ENCODE measurements at regions of chr22 and their contacts with region 1.

Region 1: GRCh38 chr22:24230911-24231656 is 13.8 kb downstream of the GGT5 start:
- DNase-seq: peak; percentile 71
- H3K4me3 Mint-ChIP-seq: no peak overlapping the region
- H3K27ac Mint-ChIP-seq: no peak overlapping the region
- H3K4me1 Mint-ChIP-seq: peaks cover 3% of the 10 kb centered on the region
- H3K27me3 Mint-ChIP-seq: peaks cover 2% of the 10 kb centered on the region

Region 2: GRCh38 chr22:24189249-24190158 is 41.6 kb before region 1 on chr22:
- CTCF ChIA-PET with region 1: interaction called, 26 read pairs
- POLR2A ChIA-PET with region 1: no interaction called
- DNase-seq: peak; percentile 68
- H3K4me3 Mint-ChIP-seq: no peak overlapping the region
- H3K27ac Mint-ChIP-seq: no peak overlapping the region
- H3K4me1 Mint-ChIP-seq: peaks cover 3% of the 10 kb centered on the region
- H3K27me3 Mint-ChIP-seq: peaks cover 2% of the 10 kb centered on the region

Region 3: DNA sequence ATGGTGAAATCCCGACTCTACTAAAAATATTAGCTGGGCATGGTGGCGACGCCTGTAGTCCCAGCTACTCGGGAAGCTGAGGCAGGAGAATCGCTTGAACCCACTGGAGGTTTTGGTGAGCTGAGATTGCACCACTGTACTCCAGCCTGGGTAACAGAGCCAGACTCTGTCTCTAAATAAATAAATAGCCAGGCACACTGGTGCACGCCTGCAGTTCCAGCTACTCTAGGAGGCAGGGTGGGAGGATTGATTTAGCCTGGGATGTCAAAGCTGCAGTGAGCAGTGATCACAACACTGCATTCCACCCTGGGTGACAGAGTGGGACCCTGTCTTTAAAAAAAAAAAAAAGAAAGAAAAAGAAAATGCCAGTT is 32.4 kb before region 1 on chr22:
- CTCF ChIA-PET with region 1: interaction called, 10 read pairs
- POLR2A ChIA-PET with region 1: no interaction called
- DNase-seq: no peak
- H3K4me3 Mint-ChIP-seq: no peak overlapping the region
- H3K27ac Mint-ChIP-seq: peak overlapping the region; percentile 87
- H3K4me1 Mint-ChIP-seq: peaks cover 40% of the 10 kb centered on the region
- H3K27me3 Mint-ChIP-seq: peaks cover 8% of the 10 kb centered on the region

Region 4: DNA sequence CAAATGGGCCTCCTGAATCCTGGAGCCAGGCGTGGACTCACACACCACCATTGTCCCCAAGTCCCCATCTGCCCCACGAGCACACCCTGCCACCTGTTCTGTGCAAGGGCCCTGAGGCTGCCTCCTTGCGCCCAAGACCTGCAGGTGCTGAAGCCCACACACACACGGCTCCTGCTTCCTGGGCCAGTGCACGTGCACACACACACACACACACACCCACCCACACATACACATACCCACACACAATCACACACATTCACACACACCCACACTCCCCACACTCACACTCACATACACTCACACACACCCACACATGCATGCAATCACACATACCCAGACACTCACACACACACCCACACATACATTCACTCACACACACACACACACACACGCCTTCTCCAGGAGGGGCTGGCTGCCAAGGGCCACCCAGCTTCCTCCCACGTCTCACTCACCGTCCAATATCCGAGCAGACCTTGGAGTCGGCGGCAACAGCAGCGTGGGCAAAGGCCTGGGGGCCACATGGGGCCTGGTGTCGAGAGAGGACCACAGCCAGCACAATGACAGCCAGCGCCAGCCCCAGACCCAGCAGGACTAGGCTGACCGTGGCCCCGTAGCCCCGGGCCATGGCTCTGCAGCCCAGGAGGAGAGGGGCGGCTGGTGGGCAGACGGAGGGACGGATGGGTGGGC is 13.2 kb after region 1 on chr22:
- CTCF ChIA-PET with region 1: interaction called, 30 read pairs
- POLR2A ChIA-PET with region 1: no interaction called
- DNase-seq: no peak
- H3K4me3 Mint-ChIP-seq: no peak overlapping the region
- H3K27ac Mint-ChIP-seq: peak overlapping the region; percentile 71
- H3K4me1 Mint-ChIP-seq: peaks cover 42% of the 10 kb centered on the region
- H3K27me3 Mint-ChIP-seq: peaks cover 3% of the 10 kb centered on the region

Region 5: DNA sequence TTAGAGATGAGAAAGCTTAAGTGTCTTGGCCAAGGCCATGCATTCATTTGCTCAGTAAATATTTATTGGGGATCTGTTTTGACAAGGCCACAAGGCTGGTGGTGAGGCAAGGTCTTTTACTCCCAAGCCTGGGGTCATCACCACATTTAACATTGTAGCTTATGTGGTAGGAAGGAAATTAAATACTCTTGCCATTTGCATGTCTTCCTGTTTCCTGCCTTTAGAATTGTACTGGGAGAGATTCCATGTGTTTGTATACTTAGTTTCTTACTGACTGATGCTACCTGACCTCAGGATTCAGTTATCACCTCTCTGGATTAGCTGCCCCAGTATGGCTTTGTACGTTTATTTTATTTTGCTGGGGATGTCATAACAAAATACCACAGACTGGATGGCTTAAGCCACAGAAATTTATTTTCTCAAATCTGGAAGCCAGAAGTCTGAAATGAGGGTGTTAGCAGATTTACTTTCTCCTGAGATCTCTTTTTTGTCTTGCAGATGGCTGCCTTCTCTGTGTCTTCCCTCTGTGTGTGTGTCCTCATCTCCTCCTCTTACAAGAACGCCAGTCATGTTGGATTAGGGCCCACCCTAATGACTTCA is 84.4 kb after region 1 on chr22:
- CTCF ChIA-PET with region 1: no interaction called
- POLR2A ChIA-PET with region 1: no interaction called
- DNase-seq: no peak
- H3K4me3 Mint-ChIP-seq: no peak overlapping the region
- H3K27ac Mint-ChIP-seq: no peak overlapping the region
- H3K4me1 Mint-ChIP-seq: peaks cover 7% of the 10 kb centered on the region
- H3K27me3 Mint-ChIP-seq: no peaks in the 10 kb centered on the region